A549 (cell line): ENCODE measurements at regions of chr18 and their contacts with region 1.

Region 1: DNA sequence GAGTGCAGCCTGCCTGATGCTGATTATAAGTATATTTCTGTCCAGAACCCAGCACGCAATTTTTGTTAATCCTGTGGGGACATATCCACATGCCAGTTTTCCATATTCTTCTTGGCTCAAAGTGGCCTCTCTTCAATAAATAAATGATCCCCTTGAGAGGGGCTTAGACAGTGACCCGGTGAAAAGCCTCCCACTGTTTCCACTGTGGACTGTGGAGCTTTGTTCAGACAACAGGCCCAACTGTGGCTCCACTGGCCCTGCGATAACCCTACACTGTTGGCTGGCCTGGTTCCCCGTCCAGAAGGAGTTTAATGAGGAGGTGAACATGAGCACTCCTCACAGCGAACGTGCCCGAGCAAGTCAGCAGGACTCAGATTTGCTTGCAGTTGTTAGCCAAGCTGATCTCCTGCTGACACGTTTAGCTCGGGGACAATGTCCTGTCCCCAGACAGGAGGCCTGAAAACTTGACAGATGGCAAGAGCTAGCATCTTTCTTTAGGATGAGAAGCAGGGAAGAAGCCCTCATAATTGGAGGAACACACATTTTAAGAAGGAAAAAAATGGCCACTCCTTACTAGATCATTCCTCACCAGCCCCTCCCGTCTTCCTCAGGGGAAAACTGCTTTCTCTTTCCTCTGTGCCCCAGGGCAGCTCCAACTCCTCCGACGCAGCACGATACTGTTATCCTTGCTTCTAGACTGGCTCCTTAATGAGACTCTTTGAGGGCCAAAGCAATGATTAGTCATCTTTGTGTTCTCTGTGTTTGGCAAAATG is 20.0 kb upstream of the MTCL1 start:
- DNase-seq: no peak
- ATAC-seq: no peak
- H3K4me3 ChIP-seq: no peak overlapping the region
- H3K27ac ChIP-seq: 0 out of 6 replicates have a peak overlapping the region, but pooled peaks of 1 of the 2 experiments have one; percentile 11
- H3K4me1 ChIP-seq: no peaks in the 10 kb centered on the region
- CTCF ChIP-seq: no peak
- EP300 ChIP-seq: no peak
- POLR2A ChIP-seq: no peak
- RAD21 ChIP-seq: no peak

Region 2: DNA sequence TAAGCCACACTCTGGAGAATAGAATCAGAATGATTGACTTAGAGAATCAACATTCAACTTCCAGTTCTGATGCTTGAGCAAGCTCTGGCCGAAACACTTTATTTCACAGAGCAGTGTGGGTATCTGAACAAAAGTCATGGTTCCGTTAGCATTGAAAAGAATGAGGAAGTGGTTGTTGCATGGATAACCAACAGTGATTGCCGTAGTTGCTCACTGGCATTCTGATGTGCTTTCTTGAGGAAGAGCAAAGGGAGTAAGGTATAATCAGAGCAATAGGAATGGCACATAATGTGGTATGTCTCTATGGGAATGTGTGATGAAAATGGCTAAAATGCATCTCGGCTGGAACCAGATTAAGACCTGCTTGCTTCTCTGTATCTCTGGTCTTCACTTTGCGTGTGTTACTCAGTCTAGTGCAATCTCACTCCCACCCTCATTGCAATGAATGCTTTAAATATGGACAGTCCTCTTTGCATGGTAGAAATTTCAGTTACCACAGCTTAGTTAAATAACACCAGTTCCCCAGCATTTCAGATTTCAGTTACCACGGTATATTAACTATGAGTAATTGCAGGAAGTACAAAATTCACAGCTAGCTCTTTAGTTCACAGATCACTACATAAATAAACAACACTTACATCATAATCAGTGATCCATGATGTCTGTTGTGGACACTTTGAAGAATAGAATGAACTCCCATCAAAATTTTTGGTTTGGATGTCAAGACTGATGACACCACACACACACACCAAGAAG is 83.9 kb before region 1 on chr18:
- CTCF ChIA-PET with region 1: no interaction called
- POLR2A ChIA-PET with region 1: no interaction called
- DNase-seq: no peak
- ATAC-seq: no peak
- H3K4me3 ChIP-seq: no peak overlapping the region
- H3K27ac ChIP-seq: no peak overlapping the region
- H3K4me1 ChIP-seq: no peaks in the 10 kb centered on the region
- CTCF ChIP-seq: no peak
- EP300 ChIP-seq: no peak
- POLR2A ChIP-seq: no peak
- RAD21 ChIP-seq: no peak

Region 3: GRCh38 chr18:8696749-8697211 is 11.5 kb after region 1 on chr18:
- CTCF ChIA-PET with region 1: interaction called, 19 read pairs
- POLR2A ChIA-PET with region 1: no interaction called
- DNase-seq: peak; percentile 56 to 60
- ATAC-seq: peak; percentile 85 to 86; a peak in 5 of 6 replicates
- H3K4me3 ChIP-seq: no peak overlapping the region
- H3K27ac ChIP-seq: peak overlapping the region in 1 of 2 experiments; percentile 49; a peak in 1 of 6 replicates
- H3K4me1 ChIP-seq: peaks cover 17% of the 10 kb centered on the region
- CTCF ChIP-seq: peak; percentile 77
- EP300 ChIP-seq: no peak
- POLR2A ChIP-seq: no peak
- RAD21 ChIP-seq: peak; percentile 67 to 68